AG04450 (cell line): ENCODE measurements at regions of chr7 and their contacts with region 1.

Region 1: GRCh38 chr7:23679898-23680413 is at the start of gene FAM221A:
- DNase-seq: peak; percentile 47
- H3K4me3 ChIP-seq: peak within 1 kb of the TSS; percentile 68
- H3K27ac ChIP-seq: peak within 1 kb of the TSS; percentile 31
- H3K27me3 ChIP-seq: no peaks in the 10 kb centered on the region
- CTCF ChIP-seq: peak; percentile 70
- polyA plus RNA-seq, gene FAM221A: 3.1 and 3.5 TPM in 2 replicates

Region 2: DNA sequence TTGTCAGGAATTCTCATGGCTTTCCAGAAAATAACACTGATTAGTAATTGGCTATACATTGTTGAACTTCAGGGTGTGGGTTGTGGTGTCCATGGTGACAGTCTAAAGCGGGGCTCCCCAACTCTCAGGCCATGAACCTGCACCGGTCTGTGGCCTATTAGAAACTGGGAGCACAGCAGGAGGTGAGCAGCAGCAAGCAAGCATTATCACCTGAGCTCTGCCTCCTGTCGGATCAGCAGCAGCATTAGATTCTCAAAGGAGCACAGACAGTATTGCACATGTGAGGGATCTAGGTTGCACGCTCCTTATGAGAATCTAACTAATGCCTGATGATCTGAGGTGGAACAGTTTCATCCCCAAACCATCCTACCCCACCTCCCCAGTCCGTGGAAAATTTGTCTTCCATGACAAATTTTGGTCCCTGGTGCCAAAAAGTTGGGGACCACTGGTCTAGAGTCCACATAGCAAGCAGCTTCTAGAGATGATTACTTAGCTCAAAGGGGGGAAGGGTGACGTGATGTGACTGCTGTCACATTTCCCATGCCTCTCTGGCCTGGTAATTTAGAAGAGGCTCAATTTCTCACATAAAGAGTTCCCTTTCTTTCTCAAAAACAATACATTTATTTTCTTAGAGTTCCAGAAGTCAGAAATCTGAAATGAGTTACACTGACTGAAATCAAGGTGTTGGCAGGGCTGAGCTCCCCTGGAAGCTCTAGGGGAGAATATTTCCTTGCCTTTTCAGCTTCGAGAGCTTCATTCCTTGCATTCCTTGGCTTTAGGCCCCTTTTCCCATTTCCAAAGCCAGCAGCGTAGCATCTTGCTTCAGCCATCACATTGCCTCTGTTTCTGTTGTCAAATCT is 17.6 kb before region 1 on chr7:
- CTCF ChIA-PET with region 1: interaction called, 14 read pairs
- POLR2A ChIA-PET with region 1: no interaction called
- DNase-seq: no peak
- H3K4me3 ChIP-seq: no peak overlapping the region
- H3K27ac ChIP-seq: no peak overlapping the region
- H3K27me3 ChIP-seq: no peaks in the 10 kb centered on the region
- CTCF ChIP-seq: no peak

Region 3: DNA sequence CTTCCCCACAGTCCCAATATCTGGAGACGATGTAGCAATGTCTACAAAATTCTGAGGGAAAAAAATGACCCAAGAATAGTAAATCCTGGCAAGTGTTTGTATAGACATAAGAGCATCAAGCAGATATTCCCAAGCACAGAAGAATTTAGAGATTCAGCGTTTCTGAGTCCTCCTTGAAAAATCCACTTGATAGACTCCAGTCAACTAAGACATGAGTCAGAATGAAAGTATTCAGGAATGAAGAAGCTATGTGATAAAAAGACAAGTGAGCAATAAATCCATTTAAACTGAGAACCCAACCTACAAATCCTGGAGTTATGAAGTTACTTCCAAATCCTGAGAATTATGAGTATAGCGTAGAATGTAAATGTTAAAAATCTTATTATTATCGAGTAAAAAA is 517.9 kb after region 1 on chr7:
- CTCF ChIA-PET with region 1: no interaction called
- POLR2A ChIA-PET with region 1: no interaction called
- DNase-seq: no peak
- H3K4me3 ChIP-seq: no peak overlapping the region
- H3K27ac ChIP-seq: no peak overlapping the region
- H3K27me3 ChIP-seq: no peaks in the 10 kb centered on the region
- CTCF ChIP-seq: no peak